ENCODE measurements at regions of chr17 and their contacts with region 1.

Region 1: GRCh38 chr17:31877911-31878702 is 19.1 kb upstream of the COPRS start:
- DNase-seq: no peak
- ATAC-seq: no peak
- H3K4me3 ChIP-seq: no peak overlapping the region
- H3K27ac ChIP-seq: no peak overlapping the region
- H3K4me1 ChIP-seq: no peaks in the 10 kb centered on the region
- H3K27me3 ChIP-seq: no peaks in the 10 kb centered on the region
- CTCF ChIP-seq: no peak

Region 2: DNA sequence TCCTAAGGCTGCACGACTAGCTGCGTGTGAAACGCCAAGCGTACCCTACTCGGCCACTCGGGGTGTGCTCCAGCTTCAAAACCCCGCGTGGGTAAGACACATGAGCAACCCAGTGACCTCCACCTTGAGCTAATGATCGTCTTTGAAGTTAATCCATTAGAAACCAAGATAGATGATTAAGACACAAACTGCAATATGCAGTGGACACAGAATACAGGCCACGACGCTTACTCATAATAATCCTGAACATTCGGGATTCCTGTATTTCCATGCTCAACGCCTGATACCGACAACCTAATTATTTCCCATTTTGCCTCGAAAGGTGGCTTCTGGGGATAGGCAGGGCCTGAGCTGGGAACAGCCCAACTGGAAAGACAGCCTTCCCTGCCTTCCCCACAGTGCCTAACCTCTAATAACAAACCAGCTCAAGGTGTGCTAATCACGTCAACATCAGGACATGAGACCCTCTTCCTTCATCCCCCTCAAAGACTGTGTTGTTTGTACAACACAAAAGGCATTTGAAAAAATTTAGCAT is 18.6 kb before region 1 on chr17:
- CTCF ChIA-PET with region 1: no interaction called
- POLR2A ChIA-PET with region 1: no interaction called
- in situ Hi-C with region 1: no loop called
- intact Hi-C with region 1: loop called (anchors 2 kb)
- DNase-seq: peak; percentile 4
- ATAC-seq: peak; percentile 65
- H3K4me3 ChIP-seq: peak overlapping the region; percentile 49 to 86
- H3K27ac ChIP-seq: peak overlapping the region; percentile 71
- H3K4me1 ChIP-seq: peaks cover 20% of the 10 kb centered on the region
- H3K27me3 ChIP-seq: no peaks in the 10 kb centered on the region
- CTCF ChIP-seq: no peak

Region 3: GRCh38 chr17:31888124-31888523 is 10.0 kb after region 1 on chr17:
- CTCF ChIA-PET with region 1: no interaction called
- POLR2A ChIA-PET with region 1: no interaction called
- in situ Hi-C with region 1: no loop called
- intact Hi-C with region 1: no loop called
- DNase-seq: no peak
- ATAC-seq: no peak
- H3K4me3 ChIP-seq: no peak overlapping the region
- H3K27ac ChIP-seq: no peak overlapping the region
- H3K4me1 ChIP-seq: no peaks in the 10 kb centered on the region
- H3K27me3 ChIP-seq: no peaks in the 10 kb centered on the region
- CTCF ChIP-seq: no peak